Cardiac septum (tissue), 1 donor: ENCODE measurements at regions of chr10 and their contacts with region 1.

Region 1: GRCh38 chr10:21270976-21271375 is 254.5 kb downstream of the SKIDA1 start:
- DNase-seq: no peak

Region 2: GRCh38 chr10:21078410-21079329 is 192.3 kb before region 1 on chr10:
- intact Hi-C with region 1: loop called (anchors 2 kb)
- DNase-seq: peak; percentile 76